CD4-positive, alpha-beta T cell (primary cell): ENCODE measurements at regions of chr3 and their contacts with region 1.

Region 1: DNA sequence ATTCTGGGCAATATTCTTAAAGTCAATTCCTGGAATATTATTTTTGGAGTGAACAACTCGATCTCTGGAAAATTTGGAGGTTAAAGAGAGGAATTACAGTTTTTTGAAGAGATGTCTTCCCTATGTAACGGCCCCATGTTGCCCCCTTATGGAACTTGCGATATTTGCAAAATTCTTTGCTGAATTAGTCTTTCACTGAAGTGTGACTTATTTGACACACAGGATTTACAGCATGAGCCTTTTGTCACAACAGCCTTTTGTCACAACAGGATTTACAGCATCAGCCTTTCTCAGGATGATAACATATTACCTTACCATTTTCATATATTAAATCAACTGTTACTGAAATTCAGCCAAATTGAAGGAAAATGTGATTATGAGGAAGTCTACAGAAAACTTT is 37.8 kb upstream of the SPTSSB start:
- DNase-seq: peak in 10 of 14 experiments; percentile 7 to 69 (median 16)
- ATAC-seq: peak; percentile 41
- H3K4me3 ChIP-seq: no peak overlapping the region
- H3K4me3 Mint-ChIP-seq: no peak overlapping the region
- H3K27ac ChIP-seq: no peak overlapping the region
- H3K27ac Mint-ChIP-seq: no peak overlapping the region
- H3K4me1 ChIP-seq: peaks cover 15% of the 10 kb centered on the region
- H3K4me1 Mint-ChIP-seq: peaks cover 34% of the 10 kb centered on the region
- H3K27me3 ChIP-seq: no peaks in the 10 kb centered on the region
- H3K27me3 Mint-ChIP-seq: no peaks in the 10 kb centered on the region
- CTCF ChIP-seq: peak; percentile 64

Region 2: GRCh38 chr3:160707187-160707794 is 701.8 kb before region 1 on chr3:
- CTCF ChIA-PET with region 1: no interaction called
- POLR2A ChIA-PET with region 1: no interaction called
- intact Hi-C with region 1: loop called in 1 of 2 experiments (anchors 5 kb)
- DNase-seq: peak in 10 of 14 experiments; percentile 2 to 73 (median 21)
- ATAC-seq: no peak
- H3K4me3 ChIP-seq: no peak overlapping the region
- H3K4me3 Mint-ChIP-seq: no peak overlapping the region
- H3K27ac ChIP-seq: no peak overlapping the region
- H3K27ac Mint-ChIP-seq: no peak overlapping the region
- H3K4me1 ChIP-seq: no peaks in the 10 kb centered on the region
- H3K4me1 Mint-ChIP-seq: no peaks in the 10 kb centered on the region
- H3K27me3 ChIP-seq: peaks cover 11 to 27% of the 10 kb centered on the region in 2 experiments
- H3K27me3 Mint-ChIP-seq: peaks cover 46% of the 10 kb centered on the region
- CTCF ChIP-seq: peak; percentile 78

Region 3: GRCh38 chr3:161274719-161275298 is 134.3 kb before region 1 on chr3:
- CTCF ChIA-PET with region 1: interaction called, 8 read pairs
- POLR2A ChIA-PET with region 1: interaction called, 3 read pairs
- intact Hi-C with region 1: loop called (anchors 1 to 2 kb)
- DNase-seq: peak in 7 of 14 experiments; percentile 2 to 66 (median 45)
- ATAC-seq: no peak
- H3K4me3 ChIP-seq: no peak overlapping the region
- H3K4me3 Mint-ChIP-seq: no peak overlapping the region
- H3K27ac ChIP-seq: no peak overlapping the region
- H3K27ac Mint-ChIP-seq: no peak overlapping the region
- H3K4me1 ChIP-seq: no peaks in the 10 kb centered on the region
- H3K4me1 Mint-ChIP-seq: peaks cover 10% of the 10 kb centered on the region
- H3K27me3 ChIP-seq: no peaks in the 10 kb centered on the region
- H3K27me3 Mint-ChIP-seq: no peaks in the 10 kb centered on the region
- CTCF ChIP-seq: peak; percentile 50

Region 4: GRCh38 chr3:161305095-161305991 is 103.7 kb before region 1 on chr3:
- CTCF ChIA-PET with region 1: no interaction called
- POLR2A ChIA-PET with region 1: no interaction called
- intact Hi-C with region 1: loop called (anchors 2 kb)
- DNase-seq: peak in 4 of 14 experiments; percentile 16 to 52 (median 36)
- ATAC-seq: no peak
- H3K4me3 ChIP-seq: no peak overlapping the region
- H3K4me3 Mint-ChIP-seq: no peak overlapping the region
- H3K27ac ChIP-seq: no peak overlapping the region
- H3K27ac Mint-ChIP-seq: no peak overlapping the region
- H3K4me1 ChIP-seq: peaks cover 10% of the 10 kb centered on the region
- H3K4me1 Mint-ChIP-seq: peaks cover 31% of the 10 kb centered on the region
- H3K27me3 ChIP-seq: no peaks in the 10 kb centered on the region
- H3K27me3 Mint-ChIP-seq: no peaks in the 10 kb centered on the region
- CTCF ChIP-seq: peak; percentile 85